Panc1 (cell line): ENCODE measurements at regions of chr3 and their contacts with region 1.

Region 1: DNA sequence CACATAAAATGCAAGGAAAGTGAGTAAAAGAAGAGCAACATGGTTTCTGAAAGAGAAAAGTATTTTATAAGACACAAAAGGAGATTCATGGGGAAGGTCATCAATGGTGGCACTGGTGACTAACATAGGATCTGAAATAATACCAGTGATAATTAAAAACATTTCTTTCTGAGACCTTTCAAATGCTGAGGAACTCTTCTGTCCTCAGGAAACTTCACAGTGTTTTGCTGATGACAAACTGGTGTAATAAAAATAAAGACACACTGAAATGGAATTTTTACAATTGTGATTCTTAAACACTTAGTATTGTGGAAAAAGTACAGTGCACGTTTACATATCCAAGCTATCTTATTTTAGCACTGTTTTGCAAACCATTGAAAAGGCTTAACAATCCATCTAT is 80.4 kb upstream of the ZBTB20 start:
- DNase-seq: no peak
- ATAC-seq: no peak
- H3K4me3 ChIP-seq: no peak overlapping the region
- H3K27ac ChIP-seq: no peak overlapping the region
- H3K4me1 ChIP-seq: no peaks in the 10 kb centered on the region
- H3K27me3 ChIP-seq: no peaks in the 10 kb centered on the region
- CTCF ChIP-seq: no peak

Region 2: DNA sequence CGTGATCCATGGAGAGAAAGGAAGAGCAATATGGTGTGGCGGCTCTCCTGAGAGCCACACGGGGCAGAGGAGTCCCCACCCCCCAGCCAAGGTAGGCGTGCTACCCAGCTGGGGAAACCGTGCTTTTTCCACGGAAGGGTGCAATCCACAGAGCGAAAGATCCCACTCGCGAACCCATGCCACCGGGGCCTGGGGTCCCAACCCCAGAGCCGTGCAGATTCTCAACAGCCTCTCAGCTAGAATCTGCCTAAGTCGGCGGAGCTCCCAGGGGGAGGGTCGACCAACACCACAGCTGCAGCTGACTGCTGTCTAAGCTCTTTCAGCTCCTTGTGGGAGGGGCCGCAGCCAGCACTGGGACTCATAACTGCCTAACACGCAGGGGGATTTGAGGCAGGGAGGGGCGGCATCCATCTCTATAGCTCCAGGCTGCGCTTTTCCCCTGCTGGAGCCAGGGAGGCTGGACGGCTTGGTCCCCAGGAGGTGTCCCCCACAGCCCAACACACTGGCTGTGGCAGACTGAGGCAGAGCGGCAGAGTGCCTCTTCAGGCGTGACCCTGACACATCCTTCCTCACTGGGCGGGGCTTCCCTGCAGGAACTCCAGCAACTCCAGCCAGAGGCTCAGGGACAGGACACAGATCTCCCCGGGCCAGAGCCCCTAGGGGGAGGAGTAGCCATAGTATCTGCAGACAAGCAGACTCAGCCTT is 27.2 kb after region 1 on chr3:
- CTCF ChIA-PET with region 1: interaction called, 10 read pairs
- POLR2A ChIA-PET with region 1: no interaction called
- in situ Hi-C with region 1: no loop called
- intact Hi-C with region 1: no loop called
- DNase-seq: no peak
- ATAC-seq: no peak
- H3K4me3 ChIP-seq: no peak overlapping the region
- H3K27ac ChIP-seq: no peak overlapping the region
- H3K4me1 ChIP-seq: no peaks in the 10 kb centered on the region
- H3K27me3 ChIP-seq: no peaks in the 10 kb centered on the region
- CTCF ChIP-seq: no peak